ENCODE measurements at regions of chr10 and their contacts with region 1.

Region 1: DNA sequence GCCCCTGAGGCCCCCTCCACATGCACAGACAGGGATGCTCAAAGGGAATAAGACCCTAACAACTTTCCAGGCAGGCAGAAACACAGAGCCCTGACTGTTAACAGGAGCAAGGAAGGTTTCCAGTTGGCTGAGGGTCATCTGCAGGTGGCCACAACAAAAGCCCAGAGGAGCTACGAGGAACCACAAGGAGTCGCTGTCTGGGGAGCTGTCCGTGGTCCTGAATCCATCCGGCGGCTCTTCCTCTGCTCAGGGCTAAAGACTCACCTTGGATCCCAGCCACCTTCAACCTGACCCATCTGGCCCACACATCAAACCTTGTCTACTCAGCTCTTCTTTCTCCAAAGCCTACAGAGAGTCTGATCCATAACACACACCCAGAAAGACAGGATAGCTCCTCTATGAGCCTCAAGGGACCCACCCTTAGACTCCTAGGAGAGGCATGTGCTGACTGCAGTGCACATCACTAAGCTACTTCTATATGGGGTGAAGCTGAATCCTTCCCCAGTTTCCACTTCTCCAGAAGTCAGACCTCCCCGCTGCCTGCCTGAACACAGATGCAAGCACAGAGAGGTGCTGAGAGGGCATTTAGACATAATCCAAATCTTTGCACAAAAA is 104.0 kb downstream of the SLIT1 start:
- DNase-seq: peak; percentile 78
- H3K4me3 Mint-ChIP-seq: no peak overlapping the region
- H3K27ac Mint-ChIP-seq: no peak overlapping the region
- H3K4me1 Mint-ChIP-seq: no peaks in the 10 kb centered on the region
- H3K27me3 Mint-ChIP-seq: peaks cover 25% of the 10 kb centered on the region

Region 2: DNA sequence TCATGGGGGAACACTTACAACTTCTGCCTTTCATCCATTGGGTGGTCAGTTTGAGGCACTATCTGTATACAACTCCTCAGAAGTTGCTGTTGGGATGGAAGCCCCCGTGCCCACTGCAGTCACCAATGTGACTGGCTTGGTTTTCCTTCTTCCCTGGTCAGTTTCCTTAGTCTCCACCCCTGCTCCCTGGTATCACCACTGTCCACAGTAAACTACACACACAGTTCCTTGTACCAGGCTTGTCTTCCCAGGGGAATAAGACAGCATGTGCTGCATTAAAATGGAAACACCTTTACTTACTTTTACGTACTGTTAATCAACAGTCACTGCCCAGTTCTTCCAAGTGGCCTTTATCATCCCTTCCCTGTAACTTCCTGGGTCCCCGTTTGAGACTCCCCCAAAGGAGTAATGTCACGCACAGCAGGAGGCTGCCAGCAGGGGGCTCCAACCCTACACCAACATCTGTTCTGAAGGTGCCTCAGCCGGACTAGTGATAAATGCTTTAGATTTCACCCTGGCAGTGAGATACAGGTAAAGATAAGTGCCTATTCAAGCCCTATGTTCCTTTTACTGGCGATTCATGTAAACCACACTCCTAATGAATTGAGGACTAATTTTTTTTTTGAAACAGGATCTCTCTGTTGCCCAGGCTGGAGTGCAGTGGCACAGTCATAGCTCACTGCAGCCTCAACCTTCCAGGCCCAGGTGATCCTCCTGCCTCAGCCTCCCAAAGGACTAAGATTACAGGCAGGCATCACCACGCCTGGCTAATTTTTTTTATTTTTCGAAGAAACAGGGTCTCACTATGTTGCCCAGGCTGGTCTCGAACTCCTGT is 316.1 kb before region 1 on chr10:
- CTCF ChIA-PET with region 1: no interaction called
- intact Hi-C with region 1: no loop called
- DNase-seq: peak; percentile 86
- H3K4me3 Mint-ChIP-seq: no peak overlapping the region
- H3K27ac Mint-ChIP-seq: no peak overlapping the region
- H3K4me1 Mint-ChIP-seq: peaks cover 2% of the 10 kb centered on the region
- H3K27me3 Mint-ChIP-seq: no peaks in the 10 kb centered on the region

Region 3: DNA sequence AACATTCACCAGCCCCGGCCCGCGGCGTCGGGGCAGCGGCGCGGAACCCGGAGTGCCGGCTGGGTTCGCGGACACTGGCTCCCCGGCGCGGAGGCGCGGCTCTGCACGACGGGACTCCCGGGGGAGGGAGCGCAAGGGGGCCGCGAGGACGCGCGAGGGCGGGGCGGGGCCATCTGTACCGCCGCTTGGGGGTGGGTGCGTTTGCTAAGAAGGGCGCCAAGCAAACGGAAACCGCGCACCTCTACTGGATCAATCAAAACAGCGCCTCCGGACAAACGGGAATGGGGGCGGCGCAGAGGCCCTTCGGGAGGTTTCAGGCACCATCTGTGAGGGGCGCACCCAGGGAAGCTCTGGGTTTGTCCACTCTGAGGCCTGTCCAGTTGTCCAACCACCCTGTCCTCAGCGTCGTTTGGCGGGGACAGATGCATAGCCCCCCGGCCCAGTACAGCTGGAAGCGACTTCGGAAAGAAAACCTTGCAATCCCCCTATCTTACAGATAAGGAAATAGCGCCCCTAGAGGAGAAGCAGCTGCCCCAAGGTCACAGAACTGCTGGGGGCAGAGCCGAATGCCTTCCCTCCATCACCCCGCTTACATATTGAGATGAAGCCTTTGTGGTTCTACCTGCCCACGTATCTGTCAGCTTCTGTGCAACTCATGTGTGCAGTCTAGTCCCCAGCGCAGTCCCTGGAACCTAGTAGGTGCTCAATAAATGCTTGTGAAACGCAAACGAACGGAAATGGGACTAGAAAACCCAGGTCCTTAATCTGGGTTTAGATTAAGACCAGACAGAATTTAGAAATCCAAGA is 114.7 kb after region 1 on chr10:
- CTCF ChIA-PET with region 1: interaction called, 18 read pairs
- intact Hi-C with region 1: no loop called
- DNase-seq: peak; percentile 67
- H3K4me3 Mint-ChIP-seq: peak overlapping the region; percentile 65
- H3K27ac Mint-ChIP-seq: no peak overlapping the region
- H3K4me1 Mint-ChIP-seq: peaks cover 7% of the 10 kb centered on the region
- H3K27me3 Mint-ChIP-seq: peaks cover 19% of the 10 kb centered on the region

Region 4: DNA sequence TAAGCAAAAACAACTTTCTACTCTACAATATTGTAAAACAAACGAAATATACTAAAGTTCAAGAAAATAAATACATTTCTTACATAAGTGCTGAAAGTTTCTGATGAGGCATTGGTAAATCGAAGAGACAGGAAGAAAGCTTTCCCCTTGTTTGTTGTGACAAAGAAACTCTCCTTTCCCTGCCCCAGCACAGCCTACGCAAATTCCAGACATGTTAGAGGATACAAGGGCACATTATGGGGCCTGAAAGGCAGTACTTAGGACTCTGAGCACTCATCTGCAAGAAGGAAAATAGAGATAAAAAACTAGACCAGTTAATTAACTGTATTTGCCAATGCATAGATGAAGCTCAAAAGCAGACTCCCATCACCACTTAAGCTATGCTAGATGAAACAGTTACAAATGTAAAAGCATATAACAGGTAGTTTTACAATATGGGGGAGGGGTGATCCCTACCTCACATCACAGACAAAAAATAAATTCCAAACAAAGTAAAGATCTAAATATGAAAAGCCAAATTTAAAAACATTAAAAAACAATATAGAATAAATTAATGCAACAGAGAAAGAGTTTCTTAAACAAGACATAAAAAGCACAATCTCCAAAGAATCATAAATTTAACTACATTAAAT is 188.9 kb after region 1 on chr10:
- CTCF ChIA-PET with region 1: no interaction called
- intact Hi-C with region 1: no loop called
- DNase-seq: no peak
- H3K4me3 Mint-ChIP-seq: no peak overlapping the region
- H3K27ac Mint-ChIP-seq: no peak overlapping the region
- H3K4me1 Mint-ChIP-seq: peaks cover 4% of the 10 kb centered on the region
- H3K27me3 Mint-ChIP-seq: no peaks in the 10 kb centered on the region

Measured in activated naive CD4-positive, alpha-beta T cell treated with anti-CD3 and anti-CD28 coated beads for 36 hours (primary cell).